ENCODE measurements at regions of chr19 and their contacts with region 1.

Region 1: GRCh38 chr19:58182989-58183816 is at the start of gene ZNF274:
- DNase-seq: peak; percentile 89 to 96 (median 92)
- ATAC-seq: peak; percentile 85
- H3K4me3 ChIP-seq: peak within 1 kb of the TSS; percentile 99
- H3K4me3 Mint-ChIP-seq: peak within 1 kb of the TSS; percentile 97
- H3K27ac ChIP-seq: peak within 1 kb of the TSS; percentile 99 to 100
- H3K27ac Mint-ChIP-seq: peak within 1 kb of the TSS; percentile 100
- H3K4me1 ChIP-seq: peaks cover 27% of the 10 kb centered on the region
- H3K4me1 Mint-ChIP-seq: peaks cover 23% of the 10 kb centered on the region
- H3K27me3 ChIP-seq: no peaks in the 10 kb centered on the region
- H3K27me3 Mint-ChIP-seq: no peaks in the 10 kb centered on the region
- CTCF ChIP-seq: no peak
- total RNA-seq, gene ZNF274: 51.0 to 51.4 TPM

Region 2: DNA sequence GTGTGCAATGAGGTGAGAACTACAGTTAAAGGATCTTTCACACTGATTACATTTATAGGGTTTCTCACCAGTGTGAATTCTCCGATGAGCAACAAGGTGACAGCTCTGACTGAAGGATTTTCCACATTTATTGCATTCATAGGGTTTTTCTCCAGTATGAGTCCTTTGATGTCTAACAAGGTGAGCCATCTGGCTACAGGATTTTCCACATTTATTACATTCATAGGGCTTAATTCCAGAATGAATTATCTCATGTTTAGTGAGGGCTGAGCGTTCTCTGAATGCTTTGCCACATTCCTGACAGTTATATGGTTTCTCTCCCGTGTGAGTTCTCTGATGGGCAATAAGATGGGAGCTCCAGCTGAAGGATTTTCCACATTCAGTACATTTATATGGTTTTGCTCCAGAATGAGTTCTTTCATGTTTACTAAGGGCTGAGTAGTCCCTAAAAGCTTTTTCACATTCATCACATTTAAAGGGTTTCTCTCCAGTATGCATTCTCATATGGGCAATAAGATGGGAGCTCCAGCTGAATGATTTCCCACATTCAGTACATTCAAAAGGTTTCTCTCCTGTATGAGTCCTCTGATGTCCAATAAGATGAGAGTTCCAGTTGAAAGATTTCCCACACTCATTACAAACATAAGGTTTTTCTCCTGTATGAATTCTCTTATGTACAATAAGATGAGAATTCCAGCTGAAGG is 204.5 kb before region 1 on chr19:
- CTCF ChIA-PET with region 1: no interaction called
- POLR2A ChIA-PET with region 1: no interaction called
- intact Hi-C with region 1: no loop called
- DNase-seq: no peak
- ATAC-seq: no peak
- H3K4me3 ChIP-seq: no peak overlapping the region
- H3K4me3 Mint-ChIP-seq: no peak overlapping the region
- H3K27ac ChIP-seq: no peak overlapping the region
- H3K27ac Mint-ChIP-seq: no peak overlapping the region
- H3K4me1 ChIP-seq: no peaks in the 10 kb centered on the region
- H3K4me1 Mint-ChIP-seq: no peaks in the 10 kb centered on the region
- H3K27me3 ChIP-seq: no peaks in the 10 kb centered on the region
- H3K27me3 Mint-ChIP-seq: no peaks in the 10 kb centered on the region
- CTCF ChIP-seq: no peak

Region 3: GRCh38 chr19:58097781-58098681 is 85.2 kb before region 1 on chr19 and contains the start of gene ZSCAN18:
- CTCF ChIA-PET with region 1: no interaction called
- POLR2A ChIA-PET with region 1: interaction called, 6 read pairs
- intact Hi-C with region 1: loop called in 1 of 2 experiments (anchors 5 kb)
- DNase-seq: peak; percentile 89 to 99 (median 97)
- ATAC-seq: peak; percentile 95
- H3K4me3 ChIP-seq: peak within 1 kb of the TSS; percentile 95
- H3K4me3 Mint-ChIP-seq: peak within 1 kb of the TSS; percentile 84
- H3K27ac ChIP-seq: peak within 1 kb of the TSS; percentile 96 to 100
- H3K27ac Mint-ChIP-seq: peak within 1 kb of the TSS; percentile 97
- H3K4me1 ChIP-seq: peaks cover 22% of the 10 kb centered on the region
- H3K4me1 Mint-ChIP-seq: peaks cover 13% of the 10 kb centered on the region
- H3K27me3 ChIP-seq: no peaks in the 10 kb centered on the region
- H3K27me3 Mint-ChIP-seq: no peaks in the 10 kb centered on the region
- CTCF ChIP-seq: no peak
- total RNA-seq, gene ZSCAN18: 57.1 to 58.8 TPM

Region 4: DNA sequence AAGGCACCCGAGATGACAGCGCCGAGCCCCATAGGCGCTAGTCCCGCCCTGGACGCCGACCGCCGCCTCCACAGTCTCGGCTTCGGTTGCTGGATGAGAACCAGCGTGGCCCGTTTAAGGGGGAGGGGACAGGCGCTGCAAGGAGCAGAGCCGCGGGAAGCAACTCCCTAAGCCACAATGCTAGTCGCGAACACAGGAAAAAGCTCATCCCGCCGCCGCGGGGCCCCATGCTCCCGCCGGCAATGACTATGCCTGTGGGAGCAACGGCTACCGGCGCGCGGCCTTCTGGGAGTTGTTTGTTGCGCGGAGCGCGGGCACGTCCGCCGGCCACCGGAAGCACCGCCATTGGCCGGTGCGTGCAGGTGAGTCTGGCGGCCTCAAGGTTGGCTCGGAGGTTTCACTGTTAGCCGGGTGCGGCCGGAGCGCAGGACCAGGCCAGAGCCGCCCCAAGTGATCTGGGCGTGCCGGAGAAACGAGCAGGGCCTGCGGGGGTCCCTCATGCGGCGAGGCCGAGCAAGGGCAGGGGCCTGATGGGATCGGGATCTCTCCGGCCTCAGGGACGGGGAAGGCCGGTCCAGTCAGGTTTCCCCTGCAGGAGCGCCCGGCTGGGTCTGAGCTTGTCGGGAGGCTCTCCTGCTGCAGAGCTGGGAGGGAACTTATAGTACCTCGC is 45.5 kb after region 1 on chr19 and contains the start of gene ZNF544:
- CTCF ChIA-PET with region 1: interaction called, 3 read pairs
- POLR2A ChIA-PET with region 1: interaction called, 11 read pairs
- intact Hi-C with region 1: no loop called
- DNase-seq: peak in 13 of 14 experiments; percentile 7 to 67 (median 45)
- ATAC-seq: peak; percentile 79
- H3K4me3 ChIP-seq: peak within 1 kb of the TSS; percentile 85
- H3K4me3 Mint-ChIP-seq: peak within 1 kb of the TSS; percentile 97
- H3K27ac ChIP-seq: peak within 1 kb of the TSS; percentile 47 to 63
- H3K27ac Mint-ChIP-seq: peak within 1 kb of the TSS; percentile 80
- H3K4me1 ChIP-seq: peaks cover 22% of the 10 kb centered on the region
- H3K4me1 Mint-ChIP-seq: peaks cover 46% of the 10 kb centered on the region
- H3K27me3 ChIP-seq: no peaks in the 10 kb centered on the region
- H3K27me3 Mint-ChIP-seq: no peaks in the 10 kb centered on the region
- CTCF ChIP-seq: no peak
- total RNA-seq, gene ZNF544: 6.3 to 7.2 TPM

Region 5: DNA sequence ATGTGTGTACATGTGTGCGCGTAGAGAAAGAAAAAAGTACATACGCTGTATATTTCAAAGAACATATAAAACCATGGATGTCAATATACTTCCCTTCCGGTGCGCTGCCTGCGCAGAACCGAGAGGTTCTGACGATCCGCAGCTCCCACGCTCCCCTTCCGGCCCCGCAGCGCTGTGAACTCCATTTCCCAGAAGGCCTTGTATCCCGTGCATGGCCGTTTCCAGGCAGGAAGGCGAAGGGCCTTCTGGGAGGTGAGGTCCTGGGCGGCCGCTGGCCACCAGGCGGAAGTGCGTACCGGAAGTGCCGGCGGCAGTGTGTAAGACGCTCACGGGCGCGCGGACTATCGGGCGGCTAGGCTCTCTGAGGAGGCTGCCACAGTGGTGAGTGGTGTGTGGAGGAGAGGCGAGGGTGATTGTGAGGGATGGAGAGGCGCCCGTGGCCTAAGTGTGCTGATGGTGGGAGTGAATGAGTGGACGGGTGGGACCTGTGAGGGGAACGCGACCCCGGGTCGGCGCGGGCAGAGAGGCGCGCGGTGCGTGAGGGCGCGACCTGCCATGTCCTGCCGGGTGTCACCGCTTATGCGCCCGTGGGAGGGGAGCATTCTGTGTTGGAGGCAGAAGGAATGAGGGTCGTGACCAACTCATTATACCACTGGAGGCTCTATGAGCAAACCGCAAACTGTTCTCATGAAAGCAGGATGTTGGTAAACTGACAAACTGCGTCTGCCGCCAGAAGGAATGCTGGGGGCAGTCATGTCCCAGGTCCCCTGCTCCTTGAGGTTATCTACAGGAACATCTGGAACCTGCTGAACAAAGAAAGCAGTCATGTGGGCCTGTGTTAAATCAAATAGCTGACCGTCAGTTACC is 122.1 kb after region 1 on chr19 and contains the start of gene ERVK3-1:
- CTCF ChIA-PET with region 1: no interaction called
- POLR2A ChIA-PET with region 1: interaction called, 25 read pairs
- intact Hi-C with region 1: loop called (anchors 2 kb)
- DNase-seq: peak; percentile 84 to 99 (median 92)
- ATAC-seq: peak; percentile 96
- H3K4me3 ChIP-seq: peak within 1 kb of the TSS; percentile 96
- H3K4me3 Mint-ChIP-seq: peak within 1 kb of the TSS; percentile 95
- H3K27ac ChIP-seq: peak within 1 kb of the TSS; percentile 93 to 97
- H3K27ac Mint-ChIP-seq: peak within 1 kb of the TSS; percentile 95
- H3K4me1 ChIP-seq: peaks cover 21% of the 10 kb centered on the region
- H3K4me1 Mint-ChIP-seq: peaks cover 52% of the 10 kb centered on the region
- H3K27me3 ChIP-seq: no peaks in the 10 kb centered on the region
- H3K27me3 Mint-ChIP-seq: no peaks in the 10 kb centered on the region
- CTCF ChIP-seq: no peak
- total RNA-seq, gene ERVK3-1: 150 to 153 TPM

Region 6: GRCh38 chr19:58386576-58387337 is 203.6 kb after region 1 on chr19 and contains the start of gene RPS5:
- CTCF ChIA-PET with region 1: no interaction called
- POLR2A ChIA-PET with region 1: interaction called, 3 read pairs
- intact Hi-C with region 1: loop called in 1 of 2 experiments (anchors 5 kb)
- DNase-seq: peak; percentile 90 to 100 (median 95)
- ATAC-seq: peak; percentile 90
- H3K4me3 ChIP-seq: peak within 1 kb of the TSS; percentile 79
- H3K4me3 Mint-ChIP-seq: peak within 1 kb of the TSS; percentile 99
- H3K27ac ChIP-seq: peak within 1 kb of the TSS; percentile 93 to 97
- H3K27ac Mint-ChIP-seq: peak within 1 kb of the TSS; percentile 98
- H3K4me1 ChIP-seq: peaks cover 53% of the 10 kb centered on the region
- H3K4me1 Mint-ChIP-seq: peaks cover 47% of the 10 kb centered on the region
- H3K27me3 ChIP-seq: no peaks in the 10 kb centered on the region
- H3K27me3 Mint-ChIP-seq: no peaks in the 10 kb centered on the region
- CTCF ChIP-seq: no peak
- total RNA-seq, gene RPS5: 1,619 to 1,646 TPM